Activated naive CD4-positive, alpha-beta T cell treated with anti-CD3 and anti-CD28 coated beads for 36 hours (primary cell): ENCODE measurements at regions of chrX and their contacts with region 1.

Region 1: GRCh38 chrX:149527705-149528104 is 13.1 kb upstream of the EOLA1 start:
- DNase-seq: peak; percentile 47
- H3K4me3 Mint-ChIP-seq: no peak overlapping the region
- H3K27ac Mint-ChIP-seq: no peak overlapping the region
- H3K4me1 Mint-ChIP-seq: peaks cover 28% of the 10 kb centered on the region
- H3K27me3 Mint-ChIP-seq: no peaks in the 10 kb centered on the region

Region 2: DNA sequence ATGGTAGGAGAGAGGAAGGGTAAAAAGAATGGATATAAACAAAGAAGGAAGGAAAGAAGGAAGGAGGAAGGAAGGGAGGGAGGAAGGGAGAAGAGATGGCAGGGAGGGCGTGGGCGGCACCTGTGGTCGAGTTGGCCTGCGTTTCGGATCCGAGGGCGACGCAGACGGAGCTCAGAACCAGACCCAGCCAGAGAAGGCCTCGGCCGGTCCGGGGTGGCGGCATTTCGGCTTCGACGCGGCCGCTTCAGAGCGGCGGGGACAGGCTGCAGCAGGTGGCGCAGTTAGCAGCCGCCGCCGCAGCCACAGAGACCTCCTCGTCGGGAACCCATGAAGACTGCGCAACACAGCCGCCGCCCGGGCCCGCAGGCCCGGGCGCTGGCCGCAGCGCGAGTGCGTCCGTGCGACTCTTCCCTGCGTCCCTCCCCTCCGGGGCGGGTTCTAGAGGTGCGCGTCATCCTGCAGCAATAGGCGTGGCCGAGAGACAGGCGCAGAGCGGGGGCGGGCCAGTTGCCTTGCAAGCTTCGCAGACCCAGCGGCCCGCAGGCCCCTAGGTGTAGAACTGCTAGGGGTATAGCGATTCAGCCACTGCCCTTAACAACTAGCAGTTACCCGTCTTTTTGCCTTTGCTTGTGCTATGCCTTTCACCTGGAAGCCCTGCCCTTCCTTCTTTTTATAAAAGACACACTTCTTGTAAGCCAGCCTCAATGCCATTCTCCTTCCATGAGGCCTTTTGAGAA is 22.6 kb before region 1 on chrX and contains the start of gene IDS:
- CTCF ChIA-PET with region 1: interaction called, 3 read pairs
- intact Hi-C with region 1: loop called (anchors 2 kb)
- DNase-seq: peak; percentile 89
- H3K4me3 Mint-ChIP-seq: peak within 1 kb of the TSS; percentile 86
- H3K27ac Mint-ChIP-seq: peak within 1 kb of the TSS; percentile 93
- H3K4me1 Mint-ChIP-seq: peaks cover 26% of the 10 kb centered on the region
- H3K27me3 Mint-ChIP-seq: no peaks in the 10 kb centered on the region
- total RNA-seq, gene IDS: 39.9 to 43.1 TPM

Region 3: DNA sequence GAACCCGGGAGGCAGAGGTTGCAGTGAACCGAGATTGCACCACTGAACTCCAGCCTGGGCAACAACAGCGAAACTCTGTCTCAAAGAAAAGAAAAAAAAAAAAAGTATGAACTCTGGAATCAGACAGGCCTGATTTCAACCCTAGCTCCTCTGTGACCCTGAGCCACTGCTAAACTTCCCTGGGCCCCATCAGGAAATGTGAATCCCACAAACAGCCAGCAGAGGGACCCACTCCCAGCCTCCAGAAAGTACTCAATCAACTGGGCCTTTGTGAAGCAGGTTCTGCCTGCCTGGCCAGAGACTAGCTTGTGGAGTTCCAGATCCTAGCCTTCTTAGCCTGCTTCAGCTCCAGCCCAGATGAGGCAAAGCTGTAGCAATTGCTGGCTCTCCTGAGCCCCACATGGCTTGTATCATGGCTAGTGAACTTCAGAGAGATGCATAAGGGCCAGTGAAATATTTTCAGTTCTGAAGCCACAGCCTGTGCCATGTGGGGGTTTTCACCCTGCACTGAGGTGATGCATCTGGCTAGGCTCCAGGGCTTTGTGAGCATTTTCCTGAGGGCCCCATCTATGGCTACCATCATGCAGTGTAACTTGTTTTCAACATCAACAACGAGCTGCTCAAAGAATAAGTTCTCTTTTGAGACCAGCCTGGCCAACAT is 15.3 kb before region 1 on chrX:
- CTCF ChIA-PET with region 1: interaction called, 12 read pairs
- intact Hi-C with region 1: no loop called
- DNase-seq: peak; percentile 66
- H3K4me3 Mint-ChIP-seq: no peak overlapping the region
- H3K27ac Mint-ChIP-seq: no peak overlapping the region
- H3K4me1 Mint-ChIP-seq: peaks cover 19% of the 10 kb centered on the region
- H3K27me3 Mint-ChIP-seq: peaks cover 2% of the 10 kb centered on the region

Region 4: DNA sequence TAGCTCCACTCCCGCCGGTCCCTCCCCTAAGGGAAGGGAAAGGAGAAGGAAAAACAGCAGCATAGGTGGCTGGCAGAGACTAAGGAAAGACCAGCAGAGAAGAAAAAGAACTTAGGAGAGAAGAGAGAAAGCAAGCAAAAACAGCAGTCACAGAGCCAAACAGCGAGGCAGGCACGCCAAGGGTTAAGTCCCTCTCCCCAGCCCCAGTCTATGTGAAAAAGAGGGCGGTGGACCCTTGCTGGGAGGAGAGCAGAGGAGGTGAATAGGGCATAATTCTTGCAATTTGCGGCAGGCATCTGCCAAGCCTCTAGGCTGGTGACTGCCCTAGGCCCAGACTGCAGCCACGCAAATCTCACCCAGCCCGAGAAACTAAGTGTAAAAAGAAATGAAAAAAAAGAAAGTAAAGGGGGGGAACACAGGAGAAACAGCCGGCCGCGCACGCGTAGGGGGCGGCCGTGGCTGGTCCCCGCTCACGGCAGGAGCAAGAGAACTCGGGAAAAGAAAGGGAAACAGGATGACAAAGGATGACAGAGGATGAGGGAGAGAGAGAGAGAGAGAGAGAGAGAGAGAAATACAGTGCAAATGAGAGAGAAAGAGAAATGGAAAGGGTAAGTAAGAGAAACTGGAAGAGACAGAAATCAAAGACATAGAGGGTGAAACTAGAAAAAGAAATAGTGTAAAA is 302.6 kb after region 1 on chrX:
- CTCF ChIA-PET with region 1: no interaction called
- intact Hi-C with region 1: loop called (anchors 5 kb)
- DNase-seq: peak; percentile 15
- H3K4me3 Mint-ChIP-seq: peak overlapping the region; percentile 54
- H3K27ac Mint-ChIP-seq: peak overlapping the region; percentile 80
- H3K4me1 Mint-ChIP-seq: peaks cover 29% of the 10 kb centered on the region
- H3K27me3 Mint-ChIP-seq: peaks cover 3% of the 10 kb centered on the region